CD4-positive, alpha-beta memory T cell (primary cell): ENCODE measurements at regions of chr7 and their contacts with region 1.

Region 1: DNA sequence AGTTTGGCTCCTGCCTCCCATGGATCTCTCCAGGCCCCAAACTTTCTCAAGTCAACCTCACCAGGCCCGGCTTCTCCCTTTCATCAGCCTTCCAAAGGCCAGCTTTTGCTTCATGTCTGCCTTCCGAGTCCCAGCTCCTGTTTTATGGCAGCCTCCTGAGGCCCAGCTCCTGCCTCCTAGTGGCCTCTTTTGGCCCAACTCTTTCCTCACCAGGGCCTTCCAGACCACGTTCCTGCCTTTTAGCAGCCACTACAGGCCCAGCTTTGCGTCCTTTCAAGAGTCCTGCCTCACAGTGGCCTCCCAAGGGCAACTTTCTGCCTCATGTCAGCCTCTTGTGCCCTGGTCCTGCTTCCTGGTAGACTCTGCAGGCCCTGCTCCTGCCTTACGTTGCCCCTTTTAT is 15.3 kb upstream of the TMEM248 start:
- DNase-seq: no peak
- H3K4me3 ChIP-seq: no peak overlapping the region
- H3K4me3 Mint-ChIP-seq: no peak overlapping the region
- H3K27ac ChIP-seq: no peak overlapping the region
- H3K27ac Mint-ChIP-seq: peak overlapping the region in 5 of 7 donors; percentile 18 to 64 (median 60)
- H3K4me1 ChIP-seq: no peaks in the 10 kb centered on the region
- H3K4me1 Mint-ChIP-seq: peaks cover 0 to 4% (median 0%) of the 10 kb centered on the region in 4 donors
- H3K27me3 ChIP-seq: no peaks in the 10 kb centered on the region
- H3K27me3 Mint-ChIP-seq: no peaks in the 10 kb centered on the region

Region 2: DNA sequence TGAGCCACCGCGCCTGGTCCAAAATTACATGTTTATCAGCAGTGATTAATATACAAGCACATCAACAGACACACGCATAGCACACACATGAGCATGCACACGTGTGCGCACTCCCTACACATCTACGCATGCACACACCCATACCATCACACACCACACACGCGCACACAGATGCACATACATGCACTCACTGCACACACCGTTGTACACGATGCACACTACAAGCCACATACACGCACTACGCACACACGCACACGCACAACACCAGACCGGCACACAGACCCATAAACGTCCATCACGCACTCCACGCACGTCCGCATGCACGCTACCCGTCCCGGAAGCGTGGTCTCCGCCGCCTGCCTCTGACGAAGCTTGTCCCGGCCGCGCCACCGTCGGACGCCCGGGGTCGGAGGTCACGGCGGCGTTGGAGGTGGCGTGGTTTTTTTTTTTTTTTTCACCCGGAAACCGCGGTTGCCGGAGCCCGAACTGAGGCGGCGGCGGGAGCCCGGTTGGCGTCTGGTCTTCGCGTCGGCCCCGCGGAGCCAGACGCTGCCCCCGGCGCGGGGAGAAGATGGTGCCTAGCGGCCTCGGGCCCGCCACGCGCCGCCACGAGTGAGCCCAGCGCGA is 15.2 kb after region 1 on chr7 and contains the start of gene TMEM248:
- CTCF ChIA-PET with region 1: no interaction called
- POLR2A ChIA-PET with region 1: interaction called, 10 read pairs
- intact Hi-C with region 1: no loop called
- DNase-seq: peak; percentile 90 to 95 (median 93)
- H3K4me3 ChIP-seq: peak within 1 kb of the TSS; percentile 64 to 91
- H3K4me3 Mint-ChIP-seq: peak within 1 kb of the TSS; percentile 95 to 100 (median 98)
- H3K27ac ChIP-seq: peak within 1 kb of the TSS; percentile 78
- H3K27ac Mint-ChIP-seq: peak within 1 kb of the TSS; percentile 97 to 100 (median 99)
- H3K4me1 ChIP-seq: peaks cover 38% of the 10 kb centered on the region
- H3K4me1 Mint-ChIP-seq: peaks cover 22 to 49% (median 36%) of the 10 kb centered on the region in 4 donors
- H3K27me3 ChIP-seq: no peaks in the 10 kb centered on the region
- H3K27me3 Mint-ChIP-seq: peaks cover 0 to 2% of the 10 kb centered on the region in 2 donors
- total RNA-seq, gene TMEM248: 95.9 to 96.8 TPM